PC-3 (cell line): ENCODE measurements at regions of chr2 and their contacts with region 1.

Region 1: DNA sequence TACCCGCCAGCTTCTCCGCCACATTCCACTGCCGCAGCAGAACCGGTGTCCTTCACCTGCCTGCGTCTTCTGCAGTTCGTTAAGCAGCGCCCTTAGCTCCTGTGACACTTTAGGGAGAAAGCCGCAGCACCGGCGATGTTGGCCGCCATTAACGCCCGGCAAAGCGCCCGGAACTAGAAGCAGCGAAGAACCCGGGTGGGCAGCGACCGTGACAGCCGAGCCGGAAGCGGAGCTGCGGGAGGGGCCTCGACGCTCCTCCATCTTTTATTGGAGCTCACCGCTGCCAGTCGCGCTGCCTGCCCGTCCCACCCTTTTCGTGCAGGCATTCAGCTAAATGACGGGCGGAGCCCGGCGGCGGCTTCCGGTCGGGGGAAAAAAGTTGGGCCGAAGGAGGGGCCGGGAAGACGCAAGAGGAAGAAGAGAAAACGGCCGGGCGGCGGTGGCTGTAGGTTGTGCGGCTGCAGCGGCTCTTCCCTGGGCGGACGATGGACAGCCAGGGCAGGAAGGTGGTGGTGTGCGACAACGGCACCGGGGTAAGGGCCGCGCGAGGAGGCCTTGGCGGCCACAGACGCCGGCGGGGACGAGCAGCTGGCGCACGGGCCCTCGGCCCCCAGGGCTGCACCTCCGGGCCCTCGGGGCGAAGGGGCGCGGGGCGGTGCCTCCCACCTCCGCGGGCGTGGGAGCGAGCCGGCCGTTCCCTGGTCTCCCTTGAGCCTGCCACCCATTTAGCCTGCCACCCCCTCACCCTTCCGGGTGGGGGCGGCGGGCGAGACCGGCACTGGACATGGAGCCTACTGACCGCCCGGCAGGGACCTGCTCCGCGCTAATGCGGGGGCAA is at the start of gene ACTR2:
- DNase-seq: peak; percentile 96
- ATAC-seq: peak; percentile 90
- H3K4me3 ChIP-seq: peak within 1 kb of the TSS; percentile 87
- H3K27ac ChIP-seq: peak within 1 kb of the TSS; percentile 87
- H3K4me1 ChIP-seq: peaks cover 36% of the 10 kb centered on the region
- H3K27me3 ChIP-seq: no peaks in the 10 kb centered on the region
- CTCF ChIP-seq: no peak
- total RNA-seq, gene ACTR2: 56.7 and 67.2 TPM in 2 replicates

Region 2: DNA sequence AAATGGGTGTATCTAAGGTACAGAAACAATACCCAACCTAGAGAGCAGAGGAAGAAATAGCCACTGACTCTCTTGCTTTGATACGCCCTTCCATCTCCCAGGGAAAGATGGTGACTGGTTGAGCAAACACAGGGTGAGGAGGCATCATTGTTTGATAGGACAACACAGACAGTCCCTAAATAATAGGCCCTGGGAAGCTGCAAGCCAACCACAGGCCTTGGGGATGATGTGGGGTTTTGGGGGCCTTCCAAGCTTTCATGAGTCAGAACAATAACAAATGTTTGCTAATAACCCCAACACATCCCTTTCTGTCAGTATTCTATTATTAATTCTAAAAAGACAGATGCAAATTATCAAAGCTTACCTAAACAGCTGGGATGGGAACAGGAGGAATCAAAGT is 763.9 kb before region 1 on chr2:
- CTCF ChIA-PET with region 1: no interaction called
- POLR2A ChIA-PET with region 1: interaction called, 15 read pairs
- intact Hi-C with region 1: no loop called
- DNase-seq: peak; percentile 68
- ATAC-seq: peak; percentile 99
- H3K4me3 ChIP-seq: no peak overlapping the region
- H3K27ac ChIP-seq: no peak overlapping the region
- H3K4me1 ChIP-seq: peaks cover 14% of the 10 kb centered on the region
- H3K27me3 ChIP-seq: no peaks in the 10 kb centered on the region
- CTCF ChIP-seq: no peak

Region 3: DNA sequence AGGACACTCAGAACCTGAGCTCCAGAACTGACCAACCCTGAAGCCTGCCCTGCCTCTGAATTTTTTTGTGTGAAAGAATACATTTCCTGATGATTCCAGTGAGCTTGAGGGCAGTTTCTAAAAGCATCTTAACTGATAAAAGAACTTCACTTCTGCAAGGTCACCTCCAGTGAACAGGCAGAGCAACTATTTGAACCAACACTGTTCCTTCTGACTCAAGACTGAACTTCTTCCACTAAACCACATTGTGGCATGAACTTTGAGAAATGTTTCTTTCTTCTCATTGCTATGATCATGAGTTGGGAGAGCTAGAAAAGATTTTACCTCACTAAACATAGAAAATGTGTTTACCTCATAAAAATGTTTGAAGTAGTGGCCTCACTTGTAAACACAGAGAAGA is 490.1 kb before region 1 on chr2:
- CTCF ChIA-PET with region 1: no interaction called
- POLR2A ChIA-PET with region 1: interaction called, 13 read pairs
- intact Hi-C with region 1: no loop called
- DNase-seq: no peak
- ATAC-seq: no peak
- H3K4me3 ChIP-seq: no peak overlapping the region
- H3K27ac ChIP-seq: no peak overlapping the region
- H3K4me1 ChIP-seq: no peaks in the 10 kb centered on the region
- H3K27me3 ChIP-seq: no peaks in the 10 kb centered on the region
- CTCF ChIP-seq: no peak

Region 4: GRCh38 chr2:65064728-65065552 is 162.7 kb before region 1 on chr2:
- CTCF ChIA-PET with region 1: no interaction called
- POLR2A ChIA-PET with region 1: interaction called, 20 read pairs
- intact Hi-C with region 1: no loop called
- DNase-seq: peak; percentile 84
- ATAC-seq: peak; percentile 91
- H3K4me3 ChIP-seq: peak overlapping the region; percentile 28
- H3K27ac ChIP-seq: peak overlapping the region; percentile 78
- H3K4me1 ChIP-seq: peaks cover 30% of the 10 kb centered on the region
- H3K27me3 ChIP-seq: no peaks in the 10 kb centered on the region
- CTCF ChIP-seq: peak; percentile 86

Region 5: GRCh38 chr2:65164426-65164891 is 63.2 kb before region 1 on chr2:
- CTCF ChIA-PET with region 1: no interaction called
- POLR2A ChIA-PET with region 1: interaction called, 14 read pairs
- intact Hi-C with region 1: no loop called
- DNase-seq: no peak
- ATAC-seq: no peak
- H3K4me3 ChIP-seq: no peak overlapping the region
- H3K27ac ChIP-seq: no peak overlapping the region
- H3K4me1 ChIP-seq: peaks cover 17% of the 10 kb centered on the region
- H3K27me3 ChIP-seq: no peaks in the 10 kb centered on the region
- CTCF ChIP-seq: no peak

Region 6: DNA sequence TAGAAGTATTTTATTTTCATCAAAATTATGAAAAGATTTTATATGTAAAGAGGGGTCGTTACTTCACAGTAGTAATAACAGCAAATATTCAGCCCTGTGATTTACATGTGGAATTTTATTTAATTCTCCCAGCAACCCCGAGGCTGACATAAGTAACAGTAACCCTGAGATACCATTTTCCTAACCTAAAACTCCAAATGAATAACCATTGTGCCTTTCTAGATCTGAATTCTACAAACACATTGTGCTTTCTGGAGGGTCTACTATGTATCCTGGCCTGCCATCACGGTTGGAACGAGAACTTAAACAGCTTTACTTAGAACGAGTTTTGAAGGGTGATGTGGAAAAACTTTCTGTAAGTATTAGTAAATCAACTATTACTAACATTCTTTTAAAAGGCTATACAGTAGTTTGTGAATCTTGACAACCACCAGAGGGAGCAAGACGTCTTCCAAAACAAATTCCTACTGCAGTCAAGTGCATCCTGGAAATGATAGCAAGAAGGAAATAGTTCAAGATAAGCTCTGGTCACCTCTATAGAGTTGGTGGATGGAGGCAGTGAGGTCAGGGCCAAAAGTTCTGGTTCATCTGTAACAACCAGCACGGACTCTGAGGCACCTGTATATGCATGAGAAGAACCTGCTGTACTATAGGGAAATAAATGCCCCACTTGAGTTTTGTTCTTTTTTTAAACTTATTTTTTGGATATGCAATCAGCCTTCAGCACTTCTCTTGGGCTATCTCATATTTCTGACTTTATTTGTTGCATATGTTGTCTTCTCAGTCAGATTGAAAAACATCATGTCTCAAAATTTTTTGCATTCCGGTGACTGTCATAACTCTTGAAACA is 37.4 kb after region 1 on chr2:
- CTCF ChIA-PET with region 1: no interaction called
- POLR2A ChIA-PET with region 1: interaction called, 12 read pairs
- intact Hi-C with region 1: no loop called
- DNase-seq: peak; percentile 74
- ATAC-seq: peak; percentile 70
- H3K4me3 ChIP-seq: no peak overlapping the region
- H3K27ac ChIP-seq: no peak overlapping the region
- H3K4me1 ChIP-seq: peaks cover 19% of the 10 kb centered on the region; the same call in 1 of the 2 replicates
- H3K27me3 ChIP-seq: no peaks in the 10 kb centered on the region
- CTCF ChIP-seq: peak; percentile 88

Region 7: GRCh38 chr2:66434679-66435548 is 1207.3 kb after region 1 on chr2 and contains the start of gene MEIS1:
- CTCF ChIA-PET with region 1: no interaction called
- POLR2A ChIA-PET with region 1: interaction called, 15 read pairs
- intact Hi-C with region 1: no loop called
- DNase-seq: peak; percentile 90
- ATAC-seq: peak; percentile 77
- H3K4me3 ChIP-seq: peak within 1 kb of the TSS; percentile 91
- H3K27ac ChIP-seq: peak within 1 kb of the TSS; percentile 55
- H3K4me1 ChIP-seq: no peaks in the 10 kb centered on the region
- H3K27me3 ChIP-seq: no peaks in the 10 kb centered on the region
- CTCF ChIP-seq: no peak
- total RNA-seq, gene MEIS1: 4.1 and 5.9 TPM in 2 replicates